Gastrocnemius medialis (tissue), 4 donors: ENCODE measurements at regions of chr17 and their contacts with region 1.

Region 1: GRCh38 chr17:13024526-13025257 is 6.9 kb upstream of the ELAC2 start:
- DNase-seq: peak in 1 of 2 donors; percentile 26
- ATAC-seq: peak; percentile 47 to 56
- H3K4me3 ChIP-seq: peak overlapping the region in 1 of 4 donors; percentile 2
- H3K27ac ChIP-seq: no peak overlapping the region
- H3K4me1 ChIP-seq: no peaks in the 10 kb centered on the region
- H3K27me3 ChIP-seq: peaks cover 0 to 3% (median 0%) of the 10 kb centered on the region in 3 donors
- CTCF ChIP-seq: peak; percentile 52 to 93 (median 66)
- POLR2A ChIP-seq: no peak

Region 2: GRCh38 chr17:13106171-13106570 is 81.5 kb after region 1 on chr17:
- in situ Hi-C with region 1: no loop called
- intact Hi-C with region 1: no loop called
- DNase-seq: no peak
- ATAC-seq: no peak
- H3K4me3 ChIP-seq: no peak overlapping the region
- H3K27ac ChIP-seq: no peak overlapping the region
- H3K4me1 ChIP-seq: no peaks in the 10 kb centered on the region
- H3K27me3 ChIP-seq: no peaks in the 10 kb centered on the region
- CTCF ChIP-seq: no peak
- POLR2A ChIP-seq: no peak

Region 3: GRCh38 chr17:13140750-13141149 is 116.1 kb after region 1 on chr17:
- in situ Hi-C with region 1: loop called in 1 of 4 experiments (anchors 25 kb)
- intact Hi-C with region 1: no loop called
- DNase-seq: no peak
- ATAC-seq: no peak
- H3K4me3 ChIP-seq: no peak overlapping the region
- H3K27ac ChIP-seq: no peak overlapping the region
- H3K4me1 ChIP-seq: no peaks in the 10 kb centered on the region
- H3K27me3 ChIP-seq: no peaks in the 10 kb centered on the region
- CTCF ChIP-seq: no peak
- POLR2A ChIP-seq: no peak